ENCODE measurements at regions of chr2 and their contacts with region 1.

Region 1: DNA sequence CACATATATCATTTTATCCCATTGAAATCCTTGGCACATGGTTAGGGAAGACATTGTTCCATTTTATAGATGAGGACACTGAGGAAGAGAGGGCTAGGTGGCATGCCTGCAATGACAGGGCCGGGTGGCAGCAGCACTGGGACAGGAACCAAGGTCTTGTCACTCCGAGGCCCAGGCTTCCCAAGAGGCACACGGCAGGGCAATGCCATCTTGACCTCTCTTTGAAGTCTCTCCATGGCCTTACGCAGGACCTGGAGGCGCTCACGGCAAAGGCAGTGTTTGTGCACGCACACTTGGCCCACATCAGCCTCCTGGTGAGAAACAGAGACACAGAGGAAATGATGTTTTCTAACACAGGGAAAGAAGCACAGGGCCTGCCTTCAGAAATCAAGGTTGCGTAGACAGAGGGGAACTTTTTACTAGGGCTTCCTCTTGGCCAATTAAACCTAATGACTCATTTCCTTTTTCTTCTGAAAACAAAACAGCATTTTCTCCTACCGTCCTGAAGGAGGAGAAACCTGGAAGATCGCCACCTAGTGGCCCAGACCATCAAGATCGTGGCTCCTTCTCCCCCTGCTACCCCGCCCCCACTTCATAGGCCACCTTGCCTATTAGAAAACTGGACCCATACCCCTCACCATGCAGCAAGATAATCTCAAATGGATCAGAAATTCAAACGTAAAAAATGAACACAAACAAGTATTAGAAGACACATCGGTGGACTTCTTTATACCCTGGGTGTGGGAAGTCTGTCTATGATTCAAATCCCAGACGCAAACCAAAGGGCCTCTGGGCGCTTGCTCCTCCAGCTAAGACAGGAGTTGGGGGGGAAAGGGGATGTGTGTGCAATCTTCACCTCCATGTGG is 74.6 kb upstream of the SP3 start:
- DNase-seq: peak; percentile 90
- H3K4me3 ChIP-seq: no peak overlapping the region
- H3K27ac ChIP-seq: peak overlapping the region; percentile 74 to 89 (median 80)
- H3K4me1 ChIP-seq: peaks cover 3 to 5% (median 4%) of the 10 kb centered on the region in 4 donors
- H3K27me3 ChIP-seq: no peaks in the 10 kb centered on the region
- CTCF ChIP-seq: peak; percentile 78 to 91 (median 83)
- EP300 ChIP-seq: no peak
- POLR2A ChIP-seq: no peak

Region 2: DNA sequence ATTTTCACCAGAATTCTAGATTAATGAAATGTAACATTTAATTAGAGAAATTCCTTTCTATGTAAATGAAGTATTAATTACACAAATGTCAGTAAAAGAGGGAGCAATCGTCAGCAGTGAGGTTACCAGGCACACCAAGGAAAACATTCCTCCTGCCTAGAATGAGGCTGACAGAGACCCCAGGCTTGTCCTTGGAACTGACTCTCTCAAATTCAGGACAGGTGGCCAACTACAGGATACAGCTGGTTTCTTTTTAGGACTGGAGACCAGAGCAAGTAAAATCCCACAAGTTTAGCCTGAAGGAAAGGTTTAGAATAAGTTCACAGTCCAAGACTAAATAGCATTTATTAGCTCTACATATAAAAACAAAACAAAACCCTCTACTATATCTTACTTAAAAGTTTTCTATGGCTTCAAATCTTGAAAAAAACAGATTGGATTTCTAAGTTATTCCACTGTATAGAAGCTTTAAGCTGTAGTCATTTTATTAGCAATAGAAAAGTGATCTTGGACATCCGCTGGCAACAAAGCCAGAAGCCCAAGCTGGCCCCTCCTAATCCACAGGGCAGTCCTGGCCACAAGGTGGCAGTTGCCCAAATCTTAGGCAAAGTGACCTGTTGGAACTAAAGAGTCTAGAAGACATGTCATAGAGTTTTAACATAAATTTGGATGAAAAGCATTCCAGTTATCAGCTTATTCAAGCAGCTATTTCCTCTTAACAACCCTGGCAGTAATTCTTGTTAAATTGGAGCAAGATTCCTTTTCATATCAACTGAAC is 155.6 kb before region 1 on chr2:
- in situ Hi-C with region 1: loop called in 1 of 4 experiments (anchors 25 kb)
- intact Hi-C with region 1: no loop called
- DNase-seq: peak; percentile 54
- H3K4me3 ChIP-seq: no peak overlapping the region
- H3K27ac ChIP-seq: no peak overlapping the region
- H3K4me1 ChIP-seq: no peaks in the 10 kb centered on the region
- H3K27me3 ChIP-seq: no peaks in the 10 kb centered on the region
- CTCF ChIP-seq: peak; percentile 44 to 67 (median 60)
- EP300 ChIP-seq: no peak
- POLR2A ChIP-seq: no peak

Measured in transverse colon (tissue), 4 donors.